ENCODE measurements at regions of chrX and their contacts with region 1.

Region 1: DNA sequence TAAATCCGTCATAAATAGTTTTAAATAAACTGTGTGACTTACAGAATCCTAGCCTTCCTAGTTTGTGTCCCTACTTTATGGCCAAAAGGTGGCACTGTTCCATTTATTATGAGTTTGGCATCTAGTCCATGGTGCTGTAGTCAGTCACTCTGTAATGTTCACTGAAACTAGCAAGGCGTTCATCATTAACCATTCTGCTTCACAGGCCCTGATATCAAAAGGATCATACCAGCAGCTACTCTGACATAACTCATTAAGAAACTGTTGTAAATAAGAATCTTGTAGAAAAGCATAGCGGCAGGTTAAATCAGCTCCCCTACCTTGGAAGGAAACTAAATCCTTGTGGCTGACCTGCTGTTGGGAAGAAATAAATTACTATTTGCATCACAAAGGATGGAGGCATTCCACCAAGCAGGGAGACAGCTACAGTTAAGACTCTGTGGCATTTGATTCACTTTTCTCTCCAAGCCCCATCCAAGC is 919.6 kb upstream of the DIAPH2 start:
- H3K4me3 ChIP-seq: no peak overlapping the region
- H3K27ac ChIP-seq: no peak overlapping the region
- H3K4me1 ChIP-seq: no peaks in the 10 kb centered on the region
- CTCF ChIP-seq: no peak

Region 2: GRCh38 chrX:95791876-95792275 is 26.9 kb after region 1 on chrX:
- CTCF ChIA-PET with region 1: no interaction called
- POLR2A ChIA-PET with region 1: no interaction called
- H3K4me3 ChIP-seq: no peak overlapping the region
- H3K27ac ChIP-seq: no peak overlapping the region
- H3K4me1 ChIP-seq: no peaks in the 10 kb centered on the region
- CTCF ChIP-seq: no peak

Region 3: DNA sequence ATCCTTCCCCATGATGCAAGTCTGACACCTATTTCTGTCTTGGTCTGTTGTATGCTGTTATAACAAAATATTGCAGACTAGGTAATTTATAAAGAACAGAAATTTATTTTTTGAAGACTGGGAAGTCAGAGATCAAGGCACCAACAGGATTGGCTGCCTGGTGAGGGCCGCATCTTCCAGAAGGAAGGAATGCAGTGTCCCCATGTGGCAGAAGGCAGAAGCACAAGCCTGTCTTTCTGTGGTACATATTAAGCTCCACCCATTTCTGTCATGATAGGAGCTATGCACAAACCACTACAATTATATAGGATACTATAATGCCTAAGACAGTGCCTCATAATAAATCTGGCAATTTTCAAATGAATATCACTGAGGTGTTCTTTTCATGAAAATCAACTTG is 417.4 kb after region 1 on chrX:
- CTCF ChIA-PET with region 1: interaction called, 21 read pairs
- POLR2A ChIA-PET with region 1: no interaction called
- H3K4me3 ChIP-seq: no peak overlapping the region
- H3K27ac ChIP-seq: no peak overlapping the region
- H3K4me1 ChIP-seq: no peaks in the 10 kb centered on the region
- CTCF ChIP-seq: no peak